ENCODE measurements at regions of chr17 and their contacts with region 1.

Region 1: DNA sequence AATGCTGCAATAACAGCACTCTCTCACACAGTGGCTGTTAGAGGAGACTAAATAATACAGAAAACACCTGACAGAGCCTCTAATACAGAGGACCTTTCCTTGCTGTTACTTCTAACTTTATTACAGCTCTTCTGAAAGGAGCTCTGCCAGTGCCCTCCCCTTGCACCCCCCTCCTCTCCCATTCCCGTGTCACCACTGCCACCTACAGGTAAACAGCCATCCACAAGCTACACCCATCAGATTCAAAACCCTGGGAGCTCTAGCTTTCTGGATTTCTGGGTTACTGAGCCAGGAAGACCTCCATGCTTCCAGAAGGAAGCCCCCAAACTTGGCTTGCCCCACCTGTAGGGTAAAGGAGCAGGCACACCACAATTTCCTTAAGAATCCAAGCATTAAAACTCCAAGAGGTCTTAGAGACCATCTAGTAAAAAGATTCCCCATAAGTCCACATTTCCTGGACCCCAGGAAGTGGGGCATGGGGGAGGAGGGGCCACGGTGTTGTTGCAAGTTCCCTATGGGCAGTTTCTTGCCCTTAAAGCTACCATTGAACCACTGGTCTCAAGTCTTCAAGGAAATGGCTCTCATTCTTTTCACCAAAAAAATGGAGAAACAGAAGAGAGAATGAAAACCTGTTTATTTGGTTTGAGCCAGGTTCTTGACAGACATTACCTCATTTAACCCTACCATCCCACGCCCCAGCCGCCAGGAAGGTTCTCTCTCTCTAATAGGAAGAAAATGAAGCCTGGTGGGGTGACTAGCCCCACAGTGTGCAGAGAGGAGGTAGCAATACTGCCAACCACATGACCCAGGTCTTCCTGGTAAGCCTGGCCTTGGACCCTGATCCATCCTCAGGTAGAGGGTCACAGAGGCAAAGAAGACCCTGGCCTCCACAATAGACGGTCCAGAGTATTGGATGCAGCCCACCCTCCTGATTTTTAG is 52.8 kb downstream of the TOM1L2 start:
- DNase-seq: peak; percentile 94
- H3K4me3 ChIP-seq: no peak overlapping the region
- H3K27ac ChIP-seq: peak overlapping the region in 3 of 4 donors; percentile 22 to 51 (median 51)
- H3K4me1 ChIP-seq: peaks cover 50 to 53% (median 51%) of the 10 kb centered on the region in 4 donors
- H3K27me3 ChIP-seq: no peaks in the 10 kb centered on the region
- CTCF ChIP-seq: peak; percentile 70 to 84 (median 79)
- EP300 ChIP-seq: no peak
- POLR2A ChIP-seq: no peak

Region 2: DNA sequence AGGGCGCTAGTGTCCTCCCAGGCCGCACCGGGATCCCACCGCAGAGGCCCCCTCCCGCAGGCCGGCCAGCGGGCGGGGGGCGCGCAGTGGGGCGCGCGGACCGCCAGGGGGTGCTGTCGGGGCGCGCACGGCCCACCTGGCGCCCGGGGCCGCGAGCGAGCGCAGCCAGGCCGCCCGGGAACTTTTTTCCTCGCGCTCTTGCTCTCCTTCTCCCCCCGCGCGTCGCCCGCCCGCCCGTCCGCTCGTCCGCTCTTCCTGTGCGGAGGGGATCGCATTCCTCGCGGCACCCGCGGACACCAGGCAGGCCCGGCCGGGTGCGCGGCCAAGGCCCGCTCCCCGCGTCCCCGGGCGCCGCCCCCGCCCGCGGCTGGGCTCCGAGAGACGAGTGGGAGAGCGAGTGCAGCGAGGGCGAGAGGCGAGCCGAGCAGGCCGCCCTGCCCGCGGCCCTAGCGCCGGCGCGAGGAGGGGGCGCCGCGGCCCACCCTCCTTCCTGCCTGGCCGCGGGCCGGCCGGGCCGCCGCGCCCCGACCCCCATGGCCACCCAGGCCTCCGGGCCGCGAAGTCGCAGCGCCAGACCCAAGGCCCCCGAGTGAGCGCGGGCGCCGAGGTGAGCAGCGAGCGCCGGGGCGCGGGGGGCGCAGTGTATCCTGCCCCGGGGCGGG is 238.1 kb before region 1 on chr17 and contains the start of gene RAI1:
- intact Hi-C with region 1: loop called (anchors 5 kb)
- DNase-seq: no peak
- H3K4me3 ChIP-seq: peak within 1 kb of the TSS; percentile 71 to 86 (median 84)
- H3K27ac ChIP-seq: peak within 1 kb of the TSS; percentile 96 to 99 (median 98)
- H3K4me1 ChIP-seq: peaks cover 29 to 49% (median 38%) of the 10 kb centered on the region in 4 donors
- H3K27me3 ChIP-seq: no peaks in the 10 kb centered on the region
- CTCF ChIP-seq: peak; percentile 77 to 99 (median 94)
- EP300 ChIP-seq: no peak
- POLR2A ChIP-seq: no peak
- total RNA-seq, gene RAI1: 18.7 to 41.3 (median 28.3) TPM

Region 3: DNA sequence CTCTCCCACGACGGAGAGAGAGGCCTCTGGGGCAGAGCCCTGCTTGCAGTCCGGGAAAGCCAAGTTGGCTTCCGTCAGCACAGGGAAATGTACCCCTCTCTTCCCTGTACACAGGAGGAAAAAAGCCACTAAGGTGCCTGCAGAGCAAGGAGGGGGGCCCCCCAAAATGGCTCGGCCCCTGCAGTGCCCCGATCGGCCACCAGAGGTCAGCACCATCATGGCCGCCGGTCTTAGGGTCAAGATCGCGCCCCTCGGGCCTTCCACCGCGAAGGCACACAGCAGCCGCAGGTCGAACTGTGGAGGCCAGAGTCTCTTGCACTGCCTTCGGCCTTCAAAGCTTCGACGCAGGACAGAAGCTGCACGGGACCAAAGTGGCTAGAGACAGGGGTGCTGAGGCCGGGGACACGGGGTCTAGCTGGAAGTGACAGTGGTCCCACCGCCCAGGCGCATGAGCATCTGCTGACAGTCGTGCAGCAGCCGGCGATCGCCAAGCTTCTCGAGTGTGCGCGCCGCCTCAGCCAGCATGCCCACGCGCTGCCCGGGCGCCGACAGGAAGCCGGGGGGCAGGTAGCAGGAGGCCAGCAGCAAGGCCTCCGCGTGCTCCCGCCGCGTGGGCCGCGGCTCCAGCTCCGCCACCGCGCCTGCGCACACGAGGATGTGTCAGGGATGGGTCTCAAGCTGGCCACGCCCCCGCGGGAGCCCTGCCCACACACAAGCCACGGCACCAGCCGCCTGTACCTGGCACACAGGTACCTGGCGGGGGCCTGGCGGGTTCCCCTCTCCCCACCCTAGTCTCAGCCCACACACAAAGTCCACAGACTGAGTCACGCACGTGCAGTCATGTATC is 107.0 kb before region 1 on chr17:
- intact Hi-C with region 1: loop called (anchors 5 kb)
- DNase-seq: peak; percentile 97
- H3K4me3 ChIP-seq: no peak overlapping the region
- H3K27ac ChIP-seq: peak overlapping the region; percentile 35 to 83 (median 52)
- H3K4me1 ChIP-seq: peaks cover 49 to 86% (median 70%) of the 10 kb centered on the region in 4 donors
- H3K27me3 ChIP-seq: no peaks in the 10 kb centered on the region
- CTCF ChIP-seq: peak in 2 of 3 experiments; percentile 99 to 100
- EP300 ChIP-seq: no peak
- POLR2A ChIP-seq: no peak

Region 4: DNA sequence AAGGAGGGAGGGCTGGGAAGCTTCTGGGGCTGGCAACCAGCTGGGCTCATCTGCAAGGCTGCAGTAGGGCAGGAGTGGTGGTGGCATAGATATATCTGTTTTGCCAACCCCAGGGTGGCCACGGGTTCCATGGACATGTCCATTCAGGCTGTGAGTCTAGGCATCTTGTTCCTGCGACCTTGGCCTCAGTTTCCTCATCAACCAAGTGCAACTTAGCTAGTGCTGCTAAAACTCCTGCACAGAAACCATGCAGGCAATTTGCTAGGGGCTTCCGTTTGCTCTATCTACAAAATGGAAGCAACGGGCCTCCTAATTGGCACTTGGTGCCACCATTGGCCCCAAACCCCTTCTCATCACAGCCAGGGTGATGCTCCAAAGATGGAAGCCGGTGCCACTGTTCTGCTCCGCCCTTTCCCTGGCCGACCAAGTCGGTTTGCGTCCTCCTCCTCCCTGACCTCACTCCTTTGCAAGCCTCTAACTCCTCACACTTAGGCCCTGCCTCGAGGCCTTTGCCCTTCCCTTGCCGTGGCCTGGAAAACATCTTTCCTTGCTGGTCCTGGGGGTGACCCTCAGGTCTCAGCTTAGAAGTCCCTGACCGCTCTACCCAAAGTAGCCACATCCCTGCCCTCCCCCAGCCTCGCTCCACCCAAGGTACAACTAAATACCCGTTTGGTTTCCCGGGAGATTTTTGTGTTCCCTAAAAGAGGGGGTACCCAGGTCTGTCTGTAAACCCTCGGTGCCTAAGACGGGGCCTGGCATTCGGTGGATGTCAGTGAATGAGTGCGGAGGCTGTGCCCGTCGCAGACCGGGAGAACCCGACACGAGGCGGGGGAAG is 83.8 kb before region 1 on chr17:
- intact Hi-C with region 1: no loop called
- DNase-seq: no peak
- H3K4me3 ChIP-seq: peak overlapping the region; percentile 71 to 97 (median 87)
- H3K27ac ChIP-seq: peak overlapping the region; percentile 95 to 100 (median 99)
- H3K4me1 ChIP-seq: peaks cover 66 to 93% (median 91%) of the 10 kb centered on the region in 4 donors
- H3K27me3 ChIP-seq: no peaks in the 10 kb centered on the region
- CTCF ChIP-seq: no peak
- EP300 ChIP-seq: no peak
- POLR2A ChIP-seq: no peak

Region 5: DNA sequence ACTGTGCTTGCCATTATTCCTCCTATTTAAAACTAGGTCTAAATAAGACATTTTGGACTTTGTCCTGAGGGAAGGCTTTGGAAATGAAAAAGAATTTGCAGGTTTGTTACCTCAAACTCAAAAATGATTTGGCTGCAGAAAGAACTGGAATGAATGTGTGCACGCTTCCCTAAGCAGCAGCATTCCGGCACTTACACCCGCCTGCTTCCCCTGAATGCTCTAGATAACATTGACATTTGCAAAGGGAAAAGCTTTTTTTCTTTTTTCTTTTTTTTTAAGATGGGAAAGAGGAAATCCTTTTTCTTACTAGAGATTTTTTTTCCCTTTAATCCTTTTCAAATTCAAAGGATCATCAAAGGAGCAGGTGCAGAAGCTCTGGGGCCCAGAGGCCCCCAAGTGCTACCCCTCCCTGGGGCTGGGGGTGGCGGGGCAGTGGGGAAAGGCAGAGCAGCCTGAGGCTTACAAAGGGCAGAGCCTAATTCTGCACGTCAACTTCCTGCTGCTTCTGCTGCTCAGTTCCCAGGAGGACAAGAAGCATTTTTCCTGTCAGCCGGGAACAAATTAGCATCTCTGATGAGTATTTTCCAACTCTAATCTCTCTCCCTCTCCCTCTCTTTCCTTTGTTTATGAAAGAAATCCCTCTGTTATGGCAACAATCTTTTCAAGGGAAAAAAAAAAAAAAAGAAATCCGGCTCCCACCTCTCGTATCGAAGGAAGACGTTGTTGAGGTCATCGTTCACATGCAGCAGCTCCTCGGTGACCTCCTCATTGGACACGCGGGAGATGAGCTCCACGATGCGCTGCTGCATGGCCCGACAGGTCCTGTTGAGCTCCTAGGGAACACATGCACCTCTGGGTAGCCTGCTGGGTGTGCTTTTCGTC is 50.6 kb before region 1 on chr17:
- intact Hi-C with region 1: loop called (anchors 5 kb)
- DNase-seq: no peak
- H3K4me3 ChIP-seq: no peak overlapping the region
- H3K27ac ChIP-seq: peak overlapping the region; percentile 35 to 69 (median 48)
- H3K4me1 ChIP-seq: peaks cover 28 to 51% (median 34%) of the 10 kb centered on the region in 4 donors
- H3K27me3 ChIP-seq: no peaks in the 10 kb centered on the region
- CTCF ChIP-seq: no peak
- EP300 ChIP-seq: no peak
- POLR2A ChIP-seq: no peak

Region 6: DNA sequence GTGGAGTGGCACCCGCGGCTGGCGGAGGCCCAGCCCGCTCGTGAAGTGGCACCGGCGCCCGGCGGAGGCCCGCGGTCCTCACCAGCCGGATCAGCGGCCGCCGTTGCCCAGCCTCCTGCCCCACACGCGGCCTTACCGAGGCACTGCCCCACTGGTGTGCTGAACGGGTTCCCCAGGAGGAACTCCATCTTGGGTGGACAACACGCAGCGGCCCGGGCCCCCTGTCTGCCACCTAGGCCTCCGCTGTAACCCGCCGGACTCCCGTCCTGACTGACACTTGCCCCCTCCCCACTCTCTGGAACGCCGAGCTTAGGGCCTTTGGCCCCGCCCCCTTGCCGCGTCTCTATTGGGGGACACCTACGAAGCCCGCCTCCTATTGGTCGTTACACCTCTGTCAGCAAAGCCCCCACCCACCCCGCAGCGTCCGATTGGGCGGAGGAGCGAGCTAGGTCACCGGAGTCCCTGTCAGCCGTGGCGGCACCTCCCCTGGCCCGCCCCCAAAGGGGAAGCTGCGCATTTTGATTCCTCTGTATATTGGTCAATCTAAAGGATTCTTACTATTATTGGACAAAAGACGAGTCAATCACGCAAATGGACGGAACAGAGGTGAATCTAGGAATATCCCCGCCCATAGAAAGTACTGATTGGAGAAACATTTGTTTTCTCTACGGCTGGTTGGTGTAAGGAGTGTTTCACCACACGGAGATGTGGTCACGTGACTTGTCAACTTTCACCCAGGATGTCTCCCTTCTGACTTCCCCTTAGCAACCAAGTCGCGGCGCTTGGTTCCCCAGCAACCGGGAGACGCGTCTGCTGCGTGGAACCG is 52.9 kb after region 1 on chr17 and contains the starts of genes DRC3 and TOM1L2:
- intact Hi-C with region 1: loop called (anchors 10 kb)
- DNase-seq: peak; percentile 100
- H3K4me3 ChIP-seq: peak within 1 kb of the TSS; percentile 79 to 95 (median 92)
- H3K27ac ChIP-seq: peak within 1 kb of the TSS; percentile 86 to 96 (median 93)
- H3K4me1 ChIP-seq: peaks cover 26 to 51% (median 43%) of the 10 kb centered on the region in 4 donors
- H3K27me3 ChIP-seq: no peaks in the 10 kb centered on the region
- CTCF ChIP-seq: no peak
- EP300 ChIP-seq: no peak
- POLR2A ChIP-seq: peak; percentile 57
- total RNA-seq, gene DRC3: 0.71 to 4.2 (median 1.4) TPM
- total RNA-seq, gene TOM1L2: 64.4 to 96.9 (median 75.0) TPM

Region 7: DNA sequence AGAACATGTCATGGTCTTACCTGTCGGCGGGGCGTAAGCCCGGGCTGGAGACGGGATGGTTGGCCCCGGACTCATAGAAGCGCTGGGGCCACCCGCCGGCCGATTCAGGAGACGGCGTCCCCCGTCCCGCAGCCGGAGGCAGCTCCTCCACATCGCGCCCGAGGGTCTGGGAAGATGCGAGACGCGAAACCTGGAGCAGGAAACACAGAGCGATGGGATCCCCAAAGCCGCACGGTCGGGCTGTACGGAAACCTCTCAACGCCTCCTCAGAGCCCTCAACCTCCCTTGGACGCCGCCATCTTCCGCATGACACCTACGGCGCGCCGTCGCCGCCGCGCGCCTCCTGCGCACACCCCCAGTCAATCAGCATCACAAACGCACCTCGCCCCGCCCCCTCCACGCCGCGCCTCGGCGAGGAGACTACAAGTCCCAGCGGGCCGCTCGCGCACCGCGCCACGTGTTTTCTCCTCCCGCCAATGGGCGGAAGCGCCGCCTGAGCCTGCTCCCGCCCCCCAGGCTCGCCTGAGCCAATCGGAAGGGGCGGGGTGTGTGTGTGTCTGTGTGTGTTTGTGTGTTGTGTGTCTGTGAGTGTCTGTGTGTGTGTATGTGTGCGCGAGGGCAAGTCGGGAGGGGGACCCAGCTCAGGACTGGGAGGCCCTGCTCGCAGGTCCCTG is 119.6 kb after region 1 on chr17 and contains the starts of genes ATPAF2 and GID4:
- intact Hi-C with region 1: loop called (anchors 10 kb)
- DNase-seq: peak; percentile 100
- H3K4me3 ChIP-seq: peak within 1 kb of the TSS; percentile 75 to 97 (median 83)
- H3K27ac ChIP-seq: peak within 1 kb of the TSS; percentile 85 to 90 (median 88)
- H3K4me1 ChIP-seq: peaks cover 32 to 59% (median 46%) of the 10 kb centered on the region in 4 donors
- H3K27me3 ChIP-seq: no peaks in the 10 kb centered on the region
- CTCF ChIP-seq: peak in 2 of 3 experiments; percentile 4 to 6
- EP300 ChIP-seq: no peak
- POLR2A ChIP-seq: no peak
- total RNA-seq, gene ATPAF2: 10.4 to 26.1 (median 12.3) TPM
- total RNA-seq, gene GID4: 33.1 to 39.8 (median 34.4) TPM

Region 8: DNA sequence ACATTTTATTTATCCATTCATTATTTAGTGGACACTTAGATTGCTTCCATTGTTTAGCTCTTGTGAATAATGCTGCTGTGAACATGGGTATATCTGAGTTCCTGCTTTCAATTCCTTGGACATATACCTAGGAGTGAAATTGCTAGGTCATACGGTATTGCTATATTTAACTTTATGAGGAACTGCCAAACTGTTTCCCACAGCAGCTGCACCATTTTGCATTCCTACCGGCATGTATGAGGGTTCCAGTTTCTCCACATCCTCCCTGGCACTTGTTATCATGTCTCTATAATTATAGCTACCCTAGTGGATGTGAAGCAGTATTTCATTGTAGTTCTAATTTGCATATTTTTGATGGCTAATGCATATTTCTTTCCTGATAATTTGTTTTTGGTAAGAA is 144.6 kb after region 1 on chr17:
- intact Hi-C with region 1: no loop called
- DNase-seq: no peak
- H3K4me3 ChIP-seq: no peak overlapping the region
- H3K27ac ChIP-seq: no peak overlapping the region
- H3K4me1 ChIP-seq: no peaks in the 10 kb centered on the region
- H3K27me3 ChIP-seq: no peaks in the 10 kb centered on the region
- CTCF ChIP-seq: no peak
- EP300 ChIP-seq: no peak
- POLR2A ChIP-seq: no peak

Measured in esophagus muscularis mucosa (tissue), 4 donors.